Testis (tissue), 5 donors: ENCODE measurements at regions of chr1 and their contacts with region 1.

Region 1: DNA sequence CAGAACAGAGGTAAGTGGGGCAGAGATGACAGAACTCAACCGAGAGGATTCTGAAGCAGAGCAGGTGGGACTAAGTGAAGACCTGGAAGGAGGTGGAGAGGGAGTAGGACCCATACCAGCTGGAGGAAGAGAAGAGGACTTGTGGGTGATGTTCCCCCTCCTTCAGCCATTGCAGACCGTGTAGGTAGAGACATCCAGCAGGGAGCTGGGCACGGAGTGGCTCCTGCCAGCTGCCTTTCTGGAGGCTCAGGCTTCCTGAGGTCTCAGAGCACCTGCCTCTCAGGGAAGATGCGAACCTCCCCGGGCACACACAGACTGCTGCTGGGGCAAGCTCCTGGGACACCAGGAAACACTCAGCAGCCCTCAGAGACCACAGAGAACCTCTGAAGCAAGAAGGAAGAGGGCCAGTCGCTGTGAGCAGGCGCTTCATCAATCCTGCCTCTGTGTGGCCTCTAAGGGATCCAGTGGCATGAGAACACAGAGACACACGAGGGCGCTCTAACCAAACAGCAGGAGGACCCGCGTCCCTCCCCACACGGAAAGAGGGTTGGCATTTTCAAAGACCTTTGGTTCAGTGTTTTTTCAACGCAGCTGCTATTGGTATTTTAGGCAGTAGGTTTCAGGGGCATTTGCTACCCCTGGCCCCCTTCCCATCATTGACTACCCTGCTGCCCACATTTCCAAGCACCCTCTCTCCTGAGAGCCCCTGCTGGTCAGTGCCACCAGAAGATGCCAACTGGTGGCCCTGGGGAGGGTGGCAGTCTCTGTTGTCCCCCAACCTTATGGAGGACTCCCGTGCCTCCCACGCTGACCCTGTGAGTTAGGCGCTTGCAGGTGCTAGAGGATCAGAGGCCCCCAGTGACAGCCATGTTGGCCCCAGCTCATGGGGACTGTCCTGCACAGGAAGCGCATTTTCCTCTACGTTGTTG is 89.6 kb upstream of the EDN2 start:
- DNase-seq: peak; percentile 90
- H3K4me3 ChIP-seq: no peak overlapping the region
- H3K27ac ChIP-seq: no peak overlapping the region
- H3K4me1 ChIP-seq: no peaks in the 10 kb centered on the region
- H3K27me3 ChIP-seq: no peaks in the 10 kb centered on the region
- CTCF ChIP-seq: peak; percentile 48 to 81 (median 78)
- POLR2A ChIP-seq: no peak

Region 2: GRCh38 chr1:41013796-41014195 is 560.3 kb before region 1 on chr1:
- intact Hi-C with region 1: no loop called
- DNase-seq: no peak
- H3K4me3 ChIP-seq: no peak overlapping the region
- H3K27ac ChIP-seq: no peak overlapping the region
- H3K4me1 ChIP-seq: no peaks in the 10 kb centered on the region
- H3K27me3 ChIP-seq: no peaks in the 10 kb centered on the region
- CTCF ChIP-seq: no peak
- POLR2A ChIP-seq: no peak

Region 3: GRCh38 chr1:42173155-42173933 is 599.3 kb after region 1 on chr1:
- intact Hi-C with region 1: loop called (anchors 10 kb)
- DNase-seq: peak; percentile 66
- H3K4me3 ChIP-seq: no peak overlapping the region
- H3K27ac ChIP-seq: no peak overlapping the region
- H3K4me1 ChIP-seq: peaks cover 33% of the 10 kb centered on the region
- H3K27me3 ChIP-seq: no peaks in the 10 kb centered on the region
- CTCF ChIP-seq: peak; percentile 81 to 98 (median 90)
- POLR2A ChIP-seq: no peak